BJ (cell line): ENCODE measurements at regions of chr16 and their contacts with region 1.

Region 1: GRCh38 chr16:15564604-15565339 is 78.2 kb downstream of the MARF1 start:
- DNase-seq: no peak
- H3K4me3 ChIP-seq: no peak overlapping the region
- H3K27me3 ChIP-seq: no peaks in the 10 kb centered on the region
- CTCF ChIP-seq: no peak

Region 2: GRCh38 chr16:15521758-15522509 is 42.8 kb before region 1 on chr16:
- CTCF ChIA-PET with region 1: no interaction called
- POLR2A ChIA-PET with region 1: interaction called, 12 read pairs
- DNase-seq: no peak
- H3K4me3 ChIP-seq: no peak overlapping the region
- H3K27me3 ChIP-seq: no peaks in the 10 kb centered on the region
- CTCF ChIP-seq: no peak